AG04449 (cell line): ENCODE measurements at regions of chr1 and their contacts with region 1.

Region 1: GRCh38 chr1:29033829-29034466 is 89.8 kb downstream of the TMEM200B start:
- DNase-seq: no peak
- H3K4me3 ChIP-seq: no peak overlapping the region
- CTCF ChIP-seq: peak; percentile 25

Region 2: GRCh38 chr1:28782011-28782410 is 251.9 kb before region 1 on chr1:
- CTCF ChIA-PET with region 1: interaction called, 24 read pairs
- POLR2A ChIA-PET with region 1: no interaction called
- DNase-seq: no peak
- H3K4me3 ChIP-seq: no peak overlapping the region
- CTCF ChIP-seq: no peak

Region 3: DNA sequence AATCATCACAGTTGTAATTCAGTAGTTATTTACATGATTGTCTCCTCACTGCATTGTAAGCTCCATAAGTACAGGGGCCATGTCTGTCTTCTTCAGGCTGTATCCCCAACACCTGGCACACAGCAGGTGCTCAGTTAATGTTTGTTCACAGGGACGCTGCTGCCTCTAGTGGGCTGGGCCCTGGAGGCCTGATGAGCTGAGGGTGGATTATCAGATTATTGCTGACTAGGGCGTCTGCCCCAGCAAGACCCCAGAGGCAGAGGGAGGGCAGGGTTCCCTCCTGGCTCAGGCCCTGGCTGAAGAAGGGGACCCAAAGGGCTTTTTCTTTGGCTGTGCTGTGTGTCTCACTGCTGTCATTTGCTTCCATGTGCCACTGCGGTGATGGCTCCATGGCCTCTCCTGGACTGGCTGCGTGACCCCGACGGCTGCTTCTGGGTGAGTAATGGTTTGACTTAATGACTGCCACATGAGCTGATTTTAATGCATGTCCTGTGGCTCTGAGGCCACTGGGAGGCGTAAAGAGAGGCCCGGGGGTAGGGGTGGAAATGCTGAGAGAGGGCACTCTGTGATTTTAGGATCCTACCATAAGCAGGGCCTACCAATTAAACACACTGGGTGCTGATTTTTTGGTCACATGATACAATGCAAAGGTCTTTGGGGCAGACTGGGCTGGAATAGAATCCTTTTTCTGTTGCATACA is 140.4 kb before region 1 on chr1:
- CTCF ChIA-PET with region 1: interaction called, 182 read pairs
- POLR2A ChIA-PET with region 1: no interaction called
- DNase-seq: no peak
- H3K4me3 ChIP-seq: no peak overlapping the region
- CTCF ChIP-seq: peak; percentile 44

Region 4: DNA sequence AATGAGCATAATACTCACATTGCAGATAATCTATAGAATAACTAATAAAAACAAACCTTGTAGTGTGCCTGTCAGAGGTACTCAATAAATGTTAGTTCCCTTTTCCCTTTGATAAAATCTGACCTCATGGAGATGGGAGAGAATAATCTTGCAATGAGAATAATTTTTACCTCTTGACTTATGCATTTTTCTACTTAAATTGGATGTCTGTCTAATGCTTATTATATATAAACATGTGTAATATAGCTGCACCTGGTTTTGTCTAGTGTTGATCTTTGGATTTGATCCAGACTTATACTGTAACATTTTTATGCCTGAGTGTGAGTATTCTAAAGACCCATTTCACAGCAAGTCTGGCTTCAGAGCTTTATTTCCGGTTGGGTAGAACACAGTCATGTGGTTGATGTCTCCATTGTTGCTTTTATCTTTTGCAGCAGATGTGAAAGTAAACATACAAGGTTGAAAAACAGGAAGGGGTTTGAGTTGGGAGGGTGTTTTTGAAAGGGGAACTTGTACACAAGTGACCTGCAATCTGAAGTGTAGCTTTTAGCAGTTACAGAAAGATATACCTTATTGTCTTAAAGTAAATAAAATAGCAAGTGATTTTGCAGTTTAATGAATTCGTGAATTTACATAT is 107.2 kb before region 1 on chr1:
- CTCF ChIA-PET with region 1: interaction called, 12 read pairs
- POLR2A ChIA-PET with region 1: no interaction called
- DNase-seq: no peak
- H3K4me3 ChIP-seq: no peak overlapping the region
- CTCF ChIP-seq: no peak

Region 5: DNA sequence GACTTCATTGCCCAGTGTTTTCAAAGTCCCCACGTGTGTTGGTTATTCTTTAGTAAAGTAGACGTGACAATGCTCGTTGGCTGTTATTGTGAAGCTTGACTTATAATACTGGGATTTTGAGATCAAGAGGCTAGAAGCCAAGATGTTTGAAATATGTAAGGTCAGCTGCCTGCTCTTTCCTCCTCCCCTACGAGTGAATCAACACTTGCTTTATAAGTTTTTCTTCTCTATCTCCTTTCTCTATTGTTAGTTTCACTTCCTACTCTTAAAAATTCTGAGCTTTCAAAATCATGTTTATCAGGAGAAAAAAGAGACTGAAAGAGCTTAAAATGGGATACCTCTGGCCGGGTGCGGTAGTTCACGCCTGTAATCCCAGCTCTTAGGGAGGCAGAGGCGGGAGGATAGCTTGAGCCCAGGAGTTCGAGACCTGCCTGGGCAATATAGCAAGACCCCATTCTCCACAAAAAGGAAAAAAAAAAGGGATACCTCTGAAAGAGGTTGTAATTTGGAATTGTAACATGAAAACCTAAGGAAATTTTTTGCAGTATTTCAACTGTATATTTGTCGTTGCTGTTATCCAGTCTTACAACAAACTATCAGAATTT is 47.5 kb before region 1 on chr1:
- CTCF ChIA-PET with region 1: interaction called, 10 read pairs
- POLR2A ChIA-PET with region 1: no interaction called
- DNase-seq: no peak
- H3K4me3 ChIP-seq: no peak overlapping the region
- CTCF ChIP-seq: no peak

Region 6: DNA sequence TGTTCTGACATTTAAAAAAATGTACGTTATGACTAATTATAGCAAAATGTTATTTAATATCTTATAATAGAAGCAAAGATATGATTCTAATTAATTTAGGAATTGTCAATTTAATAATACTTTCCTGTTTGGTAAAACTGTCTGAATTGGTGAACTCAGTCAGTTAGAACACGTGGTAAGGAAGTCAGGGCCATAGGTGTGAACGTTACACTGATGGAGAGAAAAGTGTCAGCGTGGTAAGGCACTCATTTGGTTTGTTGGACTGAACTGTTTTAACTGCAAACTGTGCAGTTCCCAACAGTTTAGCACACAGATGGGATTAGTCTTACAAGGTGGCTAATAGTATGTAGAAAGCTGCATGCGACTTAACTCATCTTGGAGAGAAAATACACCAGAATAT is 16.7 kb before region 1 on chr1:
- CTCF ChIA-PET with region 1: interaction called, 42 read pairs
- POLR2A ChIA-PET with region 1: no interaction called
- DNase-seq: no peak
- H3K4me3 ChIP-seq: no peak overlapping the region
- CTCF ChIP-seq: no peak

Region 7: DNA sequence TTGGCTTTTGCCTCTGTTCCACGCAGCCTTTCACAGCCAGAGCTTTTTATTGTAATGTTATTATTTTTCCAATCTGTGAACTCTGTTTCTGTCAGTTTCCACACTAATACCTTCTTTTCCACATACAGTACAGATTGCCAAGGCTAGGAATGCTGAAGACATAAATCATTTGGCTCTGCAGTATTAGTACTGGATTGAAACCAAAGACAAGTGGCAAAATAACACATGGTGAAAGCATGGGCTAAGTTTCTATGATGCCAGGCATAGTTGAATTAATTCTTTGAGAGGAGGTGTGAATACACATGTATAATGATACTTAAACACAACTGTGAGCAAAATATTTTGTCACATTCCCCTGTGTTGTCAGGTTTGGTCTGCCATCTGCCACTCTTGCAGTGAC is 16.2 kb after region 1 on chr1:
- CTCF ChIA-PET with region 1: interaction called, 69 read pairs
- POLR2A ChIA-PET with region 1: no interaction called
- DNase-seq: no peak
- H3K4me3 ChIP-seq: no peak overlapping the region
- CTCF ChIP-seq: no peak